Vagina (tissue), 2 donors: ENCODE measurements at regions of chr11 and their contacts with region 1.

Region 1: DNA sequence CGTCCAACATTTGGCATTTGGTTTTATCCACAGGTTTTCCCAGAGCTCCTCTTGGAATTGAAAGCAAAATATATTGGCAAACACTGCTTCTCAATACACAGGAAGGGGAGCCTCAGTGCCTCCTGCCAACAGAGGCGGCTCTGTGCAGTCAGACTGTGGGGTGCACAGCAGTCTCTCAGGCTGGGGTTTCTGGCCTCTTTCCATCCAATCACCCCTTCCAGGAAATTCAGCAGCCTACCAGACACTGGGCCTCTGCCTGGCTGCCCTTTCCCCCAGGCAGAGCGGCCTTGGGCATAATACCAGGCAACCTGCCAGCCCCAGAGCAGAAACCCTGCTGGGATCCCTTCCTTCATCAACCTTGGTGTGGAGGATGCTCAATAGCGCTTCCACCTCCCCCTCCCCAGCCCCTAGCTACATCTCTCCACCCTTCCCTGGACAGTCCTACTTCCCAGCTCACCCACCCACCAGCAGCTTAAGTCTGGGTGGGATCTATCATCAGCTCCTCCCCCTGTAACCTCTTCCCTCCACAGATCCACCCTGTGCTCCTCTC is 17.8 kb upstream of the RAPSN start:
- DNase-seq: no peak
- H3K4me3 ChIP-seq: no peak overlapping the region
- H3K27ac ChIP-seq: peak overlapping the region; percentile 45
- H3K4me1 ChIP-seq: peaks cover 37% of the 10 kb centered on the region
- H3K27me3 ChIP-seq: no peaks in the 10 kb centered on the region
- CTCF ChIP-seq: no peak
- POLR2A ChIP-seq: no peak

Region 2: GRCh38 chr11:47317064-47317828 is 149.5 kb before region 1 on chr11:
- intact Hi-C with region 1: no loop called
- DNase-seq: no peak
- H3K4me3 ChIP-seq: no peak overlapping the region
- H3K27ac ChIP-seq: no peak overlapping the region
- H3K4me1 ChIP-seq: no peaks in the 10 kb centered on the region
- H3K27me3 ChIP-seq: no peaks in the 10 kb centered on the region
- CTCF ChIP-seq: no peak
- POLR2A ChIP-seq: no peak

Region 3: DNA sequence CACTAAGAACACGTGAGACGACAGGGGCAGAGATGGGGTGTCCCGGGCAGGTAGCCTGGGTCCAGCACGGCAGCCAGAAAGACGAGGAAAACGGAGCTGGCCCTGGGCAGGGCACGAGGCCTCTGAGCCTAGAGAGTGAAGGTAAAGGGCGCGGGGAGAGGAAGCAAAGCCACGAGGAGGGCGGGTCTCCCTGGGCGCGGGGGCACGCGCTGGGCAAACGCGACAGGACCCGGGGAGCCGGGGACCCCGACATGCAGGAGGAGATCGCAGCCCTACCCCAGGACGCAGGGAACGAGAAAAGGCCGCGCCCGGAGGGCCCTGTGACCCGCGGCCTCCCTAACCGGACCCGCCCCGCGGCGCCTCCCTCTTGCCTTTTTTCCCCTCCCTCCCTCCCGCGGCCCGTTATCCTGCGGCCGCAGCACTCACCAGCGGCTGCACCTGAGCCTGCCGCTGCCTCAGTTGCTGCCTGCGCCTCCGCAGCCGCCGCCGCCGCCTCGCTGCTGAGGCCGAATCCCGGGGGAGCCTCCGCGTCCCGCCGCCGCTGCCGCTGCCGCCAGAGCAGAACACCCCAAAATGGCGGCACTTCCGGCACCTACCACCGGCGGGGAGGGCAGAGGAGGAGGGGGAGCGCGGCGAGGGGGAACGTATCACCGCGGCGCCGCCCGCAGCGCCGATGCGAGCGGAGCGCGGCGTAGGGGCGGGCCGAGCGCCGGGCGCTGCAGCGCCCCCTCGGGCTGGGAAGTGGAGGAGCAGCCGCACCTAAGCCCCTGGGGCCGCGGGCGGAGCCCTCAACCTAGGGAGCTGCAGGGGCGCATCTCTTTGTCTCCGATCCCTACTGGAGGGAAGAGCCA is 86.0 kb after region 1 on chr11 and contains the start of gene CELF1:
- intact Hi-C with region 1: loop called (anchors 10 kb)
- DNase-seq: no peak
- H3K4me3 ChIP-seq: peak within 1 kb of the TSS; percentile 81 to 94
- H3K27ac ChIP-seq: peak within 1 kb of the TSS; percentile 92
- H3K4me1 ChIP-seq: peaks cover 49% of the 10 kb centered on the region
- H3K27me3 ChIP-seq: no peaks in the 10 kb centered on the region
- CTCF ChIP-seq: peak; percentile 77 to 95 (median 82)
- POLR2A ChIP-seq: peak in 1 of 2 donors; percentile 56
- total RNA-seq, gene CELF1: 100 TPM